ENCODE measurements at regions of chr1 and their contacts with region 1.

Region 1: DNA sequence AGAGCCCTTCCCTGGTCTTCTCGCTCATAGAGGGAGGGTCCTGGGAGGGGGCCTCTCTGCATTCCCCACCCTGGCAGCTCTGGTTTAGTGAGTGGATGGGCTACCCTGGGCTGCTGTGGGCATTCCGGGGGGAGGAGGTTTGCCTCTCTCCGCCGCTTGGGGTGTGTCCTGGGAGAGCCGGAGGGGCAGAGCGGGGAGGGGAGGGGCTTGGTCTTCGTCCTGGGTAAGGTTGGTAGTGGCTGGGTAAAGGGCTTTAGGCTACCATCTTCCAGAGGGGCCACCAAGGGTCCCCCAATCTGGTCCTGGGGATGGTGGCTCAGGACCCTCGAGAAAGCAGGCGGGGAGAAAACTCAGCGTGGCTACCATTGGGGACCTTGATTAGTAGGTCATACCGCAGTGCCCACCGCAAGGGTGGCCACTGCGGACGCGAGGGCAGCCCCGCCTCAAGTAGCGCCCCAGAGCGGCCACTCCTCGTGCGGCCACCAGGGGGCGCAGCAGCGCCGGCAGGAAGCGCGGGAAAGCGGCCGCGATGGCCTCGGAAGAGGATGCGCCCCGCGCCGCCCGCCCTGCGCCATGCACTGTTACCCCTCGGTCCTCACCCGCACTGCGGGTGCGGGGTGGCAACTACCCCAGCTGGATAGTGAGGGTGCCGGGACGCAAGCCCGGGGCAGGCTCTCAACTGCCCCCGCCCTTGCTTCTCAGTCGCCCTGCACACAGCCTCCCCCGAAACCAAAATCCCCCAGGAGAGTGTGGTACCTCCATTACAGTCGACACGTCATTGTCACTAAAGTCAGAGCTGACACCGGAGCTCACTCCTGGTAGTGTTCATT is 44.1 kb upstream of the SLC25A33 start:
- DNase-seq: peak; percentile 77
- ATAC-seq: peak; percentile 78

Region 2: GRCh38 chr1:9269078-9269501 is 226.1 kb before region 1 on chr1:
- intact Hi-C with region 1: loop called (anchors 5 kb)
- DNase-seq: peak; percentile 39
- ATAC-seq: peak; percentile 11

Region 3: DNA sequence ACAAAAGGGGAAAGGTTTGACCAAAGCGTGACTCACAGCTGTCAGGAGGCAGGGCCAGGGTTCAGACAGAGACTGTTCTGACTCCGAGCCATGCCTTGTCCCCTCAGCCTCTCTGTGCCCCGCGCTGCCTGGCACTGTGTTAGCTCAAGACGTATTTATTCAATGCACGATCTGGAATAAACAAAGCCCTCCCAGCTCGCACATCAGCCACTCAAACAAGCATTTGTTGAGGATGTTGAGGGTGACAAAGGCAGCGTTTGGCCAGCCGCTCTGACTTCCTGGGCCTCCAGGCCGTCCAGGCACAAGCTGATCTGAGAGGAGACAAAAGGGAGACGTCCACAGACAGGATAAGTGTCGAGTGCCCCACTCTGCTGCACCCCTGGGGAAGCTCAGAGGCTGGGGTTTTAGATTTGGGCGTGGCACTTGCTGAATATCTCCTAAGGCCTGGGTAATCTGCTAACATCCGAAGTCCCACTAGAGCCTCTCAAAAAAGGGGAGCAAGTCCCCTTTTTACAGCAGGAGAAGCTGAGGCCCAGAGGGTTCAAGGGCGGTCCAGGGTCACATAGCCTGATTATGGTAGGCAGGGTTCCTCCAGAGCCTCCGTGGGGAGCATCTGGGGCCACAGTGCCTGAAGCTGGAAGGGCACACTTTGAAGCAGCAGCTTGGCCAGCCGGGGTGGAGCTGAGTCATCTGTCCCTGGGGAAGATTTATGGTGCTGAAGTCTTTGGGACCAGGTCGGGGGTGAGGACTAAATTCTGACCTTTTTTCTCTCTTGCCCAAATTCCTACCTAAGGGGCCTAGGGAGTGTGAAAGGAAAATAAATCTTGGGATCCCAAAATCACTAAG is 106.6 kb before region 1 on chr1:
- intact Hi-C with region 1: no loop called
- DNase-seq: no peak
- ATAC-seq: no peak

Region 4: GRCh38 chr1:9573723-9574122 is 78.6 kb after region 1 on chr1:
- intact Hi-C with region 1: loop called (anchors 2 kb)
- DNase-seq: no peak
- ATAC-seq: peak; percentile 51

Region 5: GRCh38 chr1:10074059-10074851 is 579.1 kb after region 1 on chr1:
- intact Hi-C with region 1: no loop called
- DNase-seq: no peak
- ATAC-seq: peak; percentile 25